ENCODE measurements at regions of chr3 and their contacts with region 1.

Region 1: GRCh38 chr3:153161138-153161713 is 800 bp upstream of the RAP2B start:
- ATAC-seq: peak; percentile 61 to 79 (median 70)
- H3K4me3 ChIP-seq: peak overlapping the region; percentile 59 to 89 (median 71)
- H3K27ac ChIP-seq: peak overlapping the region in 1 of 2 donors; percentile 54
- H3K4me1 ChIP-seq: peaks cover 5 to 21% of the 10 kb centered on the region in 2 donors

Region 2: GRCh38 chr3:153043729-153044328 is 117.4 kb before region 1 on chr3:
- in situ Hi-C with region 1: loop called in 1 of 9 experiments (anchors 10 kb)
- ATAC-seq: no peak
- H3K4me3 ChIP-seq: no peak overlapping the region
- H3K27ac ChIP-seq: no peak overlapping the region
- H3K4me1 ChIP-seq: no peaks in the 10 kb centered on the region

Region 3: DNA sequence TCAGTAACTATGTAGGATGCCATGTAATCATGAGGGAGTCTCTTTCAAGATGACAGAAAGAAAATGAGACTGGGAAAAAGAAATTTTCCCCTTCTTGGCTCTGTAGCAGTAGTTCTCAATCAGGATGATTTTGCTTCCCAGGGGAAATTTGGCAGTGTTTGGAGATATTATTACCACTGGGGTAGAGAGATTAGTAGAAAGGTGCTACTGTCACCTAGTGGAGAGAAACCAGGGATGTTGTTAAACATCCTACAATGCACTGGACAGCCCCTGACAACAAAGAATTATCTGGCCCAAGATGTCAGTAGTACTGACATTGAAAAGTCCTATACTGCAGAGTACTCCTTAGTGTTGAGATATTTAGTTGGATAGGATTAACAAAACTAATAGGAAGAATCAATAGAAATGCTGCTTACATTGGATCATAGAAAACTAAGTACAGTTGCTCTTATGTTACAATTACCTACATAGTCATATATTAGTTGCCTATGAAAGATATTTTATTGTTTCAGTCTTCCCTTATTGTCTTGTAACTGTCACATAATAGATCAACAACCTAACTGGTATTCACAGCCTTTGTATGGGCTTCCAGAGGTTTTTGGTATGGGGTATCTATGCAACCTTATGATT is 434.1 kb after region 1 on chr3:
- in situ Hi-C with region 1: loop called in 1 of 9 experiments (anchors 25 kb)
- ATAC-seq: peak in 7 of 8 experiments; percentile 38 to 91 (median 68)
- H3K4me3 ChIP-seq: no peak overlapping the region
- H3K27ac ChIP-seq: no peak overlapping the region
- H3K4me1 ChIP-seq: no peaks in the 10 kb centered on the region